ENCODE measurements at regions of chr18 and their contacts with region 1.

Region 1: GRCh38 chr18:34122724-34123334 is 101.9 kb downstream of the NOL4 start:
- DNase-seq: peak; percentile 17
- ATAC-seq: peak; percentile 81
- H3K4me3 ChIP-seq: no peak overlapping the region
- H3K27ac ChIP-seq: no peak overlapping the region
- H3K4me1 ChIP-seq: no peaks in the 10 kb centered on the region
- H3K27me3 ChIP-seq: no peaks in the 10 kb centered on the region
- CTCF ChIP-seq: peak; percentile 80 to 99 (median 91); a peak in 5 of 6 replicates
- EP300 ChIP-seq: no peak
- POLR2A ChIP-seq: no peak
- RAD21 ChIP-seq: peak; percentile 98

Region 2: DNA sequence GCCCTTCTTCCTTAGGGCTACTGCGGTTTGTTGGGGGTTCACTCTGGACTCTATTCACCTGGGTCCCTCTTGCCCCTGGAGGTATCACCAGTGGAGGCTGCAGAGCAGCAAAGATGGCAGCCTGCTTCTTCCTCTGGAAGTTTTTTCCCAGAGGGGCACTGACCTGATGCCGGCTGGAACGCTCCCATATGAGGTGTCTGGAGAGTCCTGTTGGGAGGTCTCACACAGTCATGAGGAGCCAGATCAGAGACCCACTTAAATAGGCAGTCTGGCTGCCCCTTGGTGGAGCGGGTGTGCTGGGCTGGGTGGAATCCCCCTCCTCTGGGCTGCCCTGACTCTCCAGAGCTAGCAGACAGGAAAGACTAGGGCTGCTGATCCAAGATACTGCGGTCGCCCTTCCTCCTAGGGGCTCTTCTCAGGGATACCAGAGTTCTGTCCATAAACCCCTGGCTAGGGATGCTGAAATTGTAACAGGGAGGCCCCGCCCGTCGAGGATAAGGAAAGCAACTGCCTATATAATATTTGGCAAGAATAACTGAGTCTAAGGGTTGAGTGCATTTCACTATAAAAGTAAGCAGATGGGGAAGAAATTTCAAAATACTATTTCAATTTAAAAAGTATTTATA is 38.8 kb before region 1 on chr18:
- CTCF ChIA-PET with region 1: interaction called, 13 read pairs
- POLR2A ChIA-PET with region 1: no interaction called
- RAD21 ChIA-PET with region 1: interaction called, 3 read pairs
- SMC1A ChIA-PET with region 1: interaction called, 4 read pairs
- in situ Hi-C with region 1: no loop called
- intact Hi-C with region 1: no loop called
- DNase-seq: no peak
- ATAC-seq: no peak
- H3K4me3 ChIP-seq: no peak overlapping the region
- H3K27ac ChIP-seq: no peak overlapping the region
- H3K4me1 ChIP-seq: no peaks in the 10 kb centered on the region
- H3K27me3 ChIP-seq: no peaks in the 10 kb centered on the region
- CTCF ChIP-seq: no peak
- EP300 ChIP-seq: no peak
- POLR2A ChIP-seq: no peak
- RAD21 ChIP-seq: no peak

Region 3: DNA sequence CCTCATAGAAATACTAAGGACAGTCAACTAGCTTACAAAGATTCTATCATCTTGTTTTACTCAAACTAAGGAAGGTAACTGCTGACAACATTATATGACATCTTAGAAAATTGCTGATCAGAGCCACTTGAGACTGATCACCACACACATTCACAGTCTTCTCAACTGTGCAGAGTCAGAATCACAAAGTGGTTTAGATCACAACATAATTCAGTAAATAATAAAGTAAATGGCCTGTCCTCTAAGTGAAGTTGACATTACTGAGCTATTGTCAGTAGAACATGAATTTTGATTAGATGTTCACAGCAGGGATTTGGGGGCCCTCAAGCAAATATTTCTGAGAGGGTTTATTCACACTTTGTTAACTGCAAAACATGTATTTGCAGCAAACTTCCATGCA is 73.4 kb after region 1 on chr18:
- CTCF ChIA-PET with region 1: interaction called, 7 read pairs
- POLR2A ChIA-PET with region 1: no interaction called
- RAD21 ChIA-PET with region 1: interaction called, 17 read pairs
- SMC1A ChIA-PET with region 1: interaction called, 5 read pairs
- in situ Hi-C with region 1: no loop called
- intact Hi-C with region 1: no loop called
- DNase-seq: no peak
- ATAC-seq: peak; percentile 35; the same call in 2 of the 3 replicates
- H3K4me3 ChIP-seq: no peak overlapping the region
- H3K27ac ChIP-seq: no peak overlapping the region
- H3K4me1 ChIP-seq: no peaks in the 10 kb centered on the region
- H3K27me3 ChIP-seq: no peaks in the 10 kb centered on the region
- CTCF ChIP-seq: no peak
- EP300 ChIP-seq: no peak
- POLR2A ChIP-seq: no peak
- RAD21 ChIP-seq: no peak

Region 4: GRCh38 chr18:34261865-34262780 is 139.3 kb after region 1 on chr18:
- CTCF ChIA-PET with region 1: interaction called, 4 read pairs
- POLR2A ChIA-PET with region 1: no interaction called
- RAD21 ChIA-PET with region 1: interaction called, 5 read pairs
- SMC1A ChIA-PET with region 1: interaction called, 12 read pairs
- in situ Hi-C with region 1: no loop called
- intact Hi-C with region 1: no loop called
- DNase-seq: no peak
- ATAC-seq: peak; percentile 96
- H3K4me3 ChIP-seq: no peak overlapping the region
- H3K27ac ChIP-seq: no peak overlapping the region
- H3K4me1 ChIP-seq: no peaks in the 10 kb centered on the region
- H3K27me3 ChIP-seq: no peaks in the 10 kb centered on the region
- CTCF ChIP-seq: no peak
- EP300 ChIP-seq: peak in 1 of 2 experiments; percentile 35; a peak in 1 of 4 replicates
- POLR2A ChIP-seq: no peak
- RAD21 ChIP-seq: no peak

Region 5: GRCh38 chr18:34358923-34359322 is 236.1 kb after region 1 on chr18:
- CTCF ChIA-PET with region 1: interaction called, 14 read pairs
- POLR2A ChIA-PET with region 1: no interaction called
- RAD21 ChIA-PET with region 1: interaction called, 25 read pairs
- SMC1A ChIA-PET with region 1: interaction called, 26 read pairs
- in situ Hi-C with region 1: no loop called
- intact Hi-C with region 1: no loop called
- DNase-seq: peak; percentile 72
- ATAC-seq: peak; percentile 88
- H3K4me3 ChIP-seq: no peak overlapping the region
- H3K27ac ChIP-seq: no peak overlapping the region; the same call in 1 of the 2 replicates
- H3K4me1 ChIP-seq: no peaks in the 10 kb centered on the region; the same call in 1 of the 2 replicates
- H3K27me3 ChIP-seq: no peaks in the 10 kb centered on the region
- CTCF ChIP-seq: peak in 1 of 3 experiments; percentile 39; a peak in 2 of 6 replicates
- EP300 ChIP-seq: peak in 1 of 2 experiments; percentile 72; a peak in 2 of 4 replicates
- POLR2A ChIP-seq: no peak
- RAD21 ChIP-seq: peak; percentile 43; the same call in 1 of the 2 replicates

Region 6: DNA sequence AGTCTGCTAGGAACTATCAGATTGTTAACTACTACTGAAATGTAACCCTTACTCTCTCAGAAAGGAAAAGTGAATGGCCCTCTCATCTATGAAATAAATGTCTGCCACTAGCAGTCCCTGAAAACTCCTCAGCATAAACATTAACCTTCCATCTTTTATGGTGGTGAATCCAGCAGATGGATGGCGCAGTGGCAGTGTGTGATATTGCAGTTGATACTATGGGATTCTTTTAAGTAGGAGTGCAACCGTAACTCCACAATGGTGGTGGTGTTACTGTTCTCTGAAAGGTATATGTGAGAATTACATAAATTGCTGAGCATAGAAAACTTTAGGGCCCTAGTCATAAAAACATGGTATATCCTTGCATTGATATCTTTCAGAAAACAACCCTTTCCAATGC is 389.6 kb after region 1 on chr18:
- CTCF ChIA-PET with region 1: interaction called, 10 read pairs
- POLR2A ChIA-PET with region 1: no interaction called
- RAD21 ChIA-PET with region 1: no interaction called
- SMC1A ChIA-PET with region 1: interaction called, 4 read pairs
- in situ Hi-C with region 1: no loop called
- intact Hi-C with region 1: no loop called
- DNase-seq: no peak
- ATAC-seq: 0 out of 3 replicates have a peak, but pooled peaks have one; percentile 18
- H3K4me3 ChIP-seq: no peak overlapping the region
- H3K27ac ChIP-seq: no peak overlapping the region
- H3K4me1 ChIP-seq: no peaks in the 10 kb centered on the region
- H3K27me3 ChIP-seq: no peaks in the 10 kb centered on the region
- CTCF ChIP-seq: no peak
- EP300 ChIP-seq: no peak
- POLR2A ChIP-seq: no peak
- RAD21 ChIP-seq: no peak

Measured in GM12878 (cell line).